ENCODE measurements at regions of chr7 and their contacts with region 1.

Region 1: GRCh38 chr7:24501009-24501408 is 72.2 kb upstream of the PALS2 start:
- DNase-seq: no peak
- H3K4me3 ChIP-seq: peak overlapping the region in 1 of 2 donors; percentile 33
- H3K27ac ChIP-seq: peak overlapping the region in 1 of 2 donors; percentile 29
- H3K4me1 ChIP-seq: peaks cover 0 to 12% of the 10 kb centered on the region in 2 donors
- H3K27me3 ChIP-seq: no peaks in the 10 kb centered on the region
- CTCF ChIP-seq: no peak

Region 2: GRCh38 chr7:24255139-24255538 is 245.9 kb before region 1 on chr7:
- intact Hi-C with region 1: no loop called
- DNase-seq: no peak
- H3K4me3 ChIP-seq: no peak overlapping the region
- H3K27ac ChIP-seq: no peak overlapping the region
- H3K4me1 ChIP-seq: no peaks in the 10 kb centered on the region
- H3K27me3 ChIP-seq: no peaks in the 10 kb centered on the region
- CTCF ChIP-seq: no peak

Region 3: DNA sequence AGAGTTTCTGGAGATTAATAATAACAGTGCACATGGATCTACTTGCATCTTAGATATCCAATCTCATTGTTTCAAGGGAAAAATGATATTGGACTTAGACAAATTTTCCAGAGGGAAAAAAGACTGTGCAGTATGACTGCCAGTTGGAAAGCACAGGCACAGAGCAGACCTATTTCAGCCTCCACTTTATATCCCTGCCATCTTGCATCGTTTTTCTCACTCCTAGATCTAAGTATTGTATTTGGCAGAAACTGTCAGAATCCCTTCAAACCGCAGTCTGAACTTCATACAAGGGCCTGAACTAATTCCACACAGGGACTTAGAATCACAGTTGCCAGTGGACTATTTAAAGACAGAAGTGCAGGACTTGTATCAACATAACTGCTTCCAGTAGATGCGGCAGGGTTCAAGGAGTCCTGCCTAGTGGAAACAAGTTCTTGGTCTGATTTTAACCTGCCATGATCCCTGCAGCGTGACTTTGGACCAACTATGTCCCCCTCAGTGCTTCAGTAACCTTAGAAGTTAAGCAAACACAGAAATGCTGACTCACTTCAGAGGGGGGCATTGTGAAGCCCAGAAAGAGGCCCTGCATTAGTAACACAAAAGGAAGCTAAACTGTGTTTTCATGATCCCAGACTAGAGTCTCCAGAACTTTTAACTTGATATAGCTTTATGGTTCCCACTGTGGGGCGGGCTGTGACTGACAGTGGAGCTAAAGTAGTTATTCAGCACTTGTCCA is 23.4 kb before region 1 on chr7:
- intact Hi-C with region 1: loop called (anchors 2 kb)
- DNase-seq: peak in 1 of 2 donors; percentile 85
- H3K4me3 ChIP-seq: peak overlapping the region; percentile 4 to 21
- H3K27ac ChIP-seq: peak overlapping the region; percentile 77 to 81
- H3K4me1 ChIP-seq: peaks cover 0 to 20% of the 10 kb centered on the region in 2 donors
- H3K27me3 ChIP-seq: no peaks in the 10 kb centered on the region
- CTCF ChIP-seq: no peak

Region 4: GRCh38 chr7:24587848-24588247 is 86.8 kb after region 1 on chr7:
- intact Hi-C with region 1: no loop called
- DNase-seq: no peak
- H3K4me3 ChIP-seq: no peak overlapping the region
- H3K27ac ChIP-seq: no peak overlapping the region
- H3K4me1 ChIP-seq: no peaks in the 10 kb centered on the region
- H3K27me3 ChIP-seq: no peaks in the 10 kb centered on the region
- CTCF ChIP-seq: peak; percentile 21 to 51 (median 33)

Measured in ascending aorta (tissue), 2 donors.